H1 (cell line): ENCODE measurements at regions of chr6 and their contacts with region 1.

Region 1: GRCh38 chr6:15621203-15622044 is 41.4 kb downstream of the DTNBP1 start:
- DNase-seq: no peak
- H3K4me3 ChIP-seq: no peak overlapping the region
- H3K27ac ChIP-seq: no peak overlapping the region
- H3K4me1 ChIP-seq: peaks cover under 1 to 4% (median 1%) of the 10 kb centered on the region in 4 experiments; a peak in 4 of 7 replicates
- H3K27me3 ChIP-seq: no peaks in the 10 kb centered on the region
- CTCF ChIP-seq: no peak
- EP300 ChIP-seq: no peak
- POLR2A ChIP-seq: no peak
- RAD21 ChIP-seq: peak in 1 of 2 experiments; percentile 14; a peak in 1 of 4 replicates

Region 2: DNA sequence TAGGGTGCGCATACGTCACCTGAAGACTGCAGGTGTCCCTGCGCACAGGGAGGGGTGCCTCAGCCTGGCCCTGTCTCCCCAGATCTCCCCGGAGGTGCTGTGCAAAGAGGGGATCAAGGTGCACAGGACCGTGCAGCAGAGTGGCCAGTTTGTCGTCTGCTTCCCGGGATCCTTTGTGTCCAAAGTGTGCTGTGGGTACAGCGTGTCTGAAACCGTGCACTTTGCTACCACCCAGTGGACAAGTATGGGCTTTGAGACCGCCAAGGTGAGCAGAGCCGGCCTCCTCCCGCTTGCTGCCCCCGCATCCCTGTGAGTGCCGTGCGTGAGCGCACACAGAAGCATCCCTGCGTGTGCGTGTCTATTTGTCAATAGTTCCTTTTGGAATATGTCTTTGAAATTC is 109.3 kb before region 1 on chr6:
- CTCF ChIA-PET with region 1: interaction called, 24 read pairs
- POLR2A ChIA-PET with region 1: no interaction called
- DNase-seq: no peak
- H3K4me3 ChIP-seq: no peak overlapping the region
- H3K27ac ChIP-seq: no peak overlapping the region
- H3K4me1 ChIP-seq: peaks cover 0 to 9% (median 5%) of the 10 kb centered on the region in 4 experiments; a peak in 6 of 7 replicates
- H3K27me3 ChIP-seq: no peaks in the 10 kb centered on the region
- CTCF ChIP-seq: peak in 2 of 3 experiments; percentile 15 to 21; a peak in 1 of 4 replicates
- EP300 ChIP-seq: no peak
- POLR2A ChIP-seq: no peak
- RAD21 ChIP-seq: peak; percentile 28 to 46; a peak in 3 of 4 replicates

Region 3: GRCh38 chr6:15518057-15518456 is 103.4 kb before region 1 on chr6:
- CTCF ChIA-PET with region 1: interaction called, 24 read pairs
- POLR2A ChIA-PET with region 1: interaction called, 4 read pairs
- DNase-seq: no peak
- H3K4me3 ChIP-seq: no peak overlapping the region
- H3K27ac ChIP-seq: no peak overlapping the region
- H3K4me1 ChIP-seq: no peaks in the 10 kb centered on the region; a peak in 1 of 7 replicates
- H3K27me3 ChIP-seq: no peaks in the 10 kb centered on the region
- CTCF ChIP-seq: no peak
- EP300 ChIP-seq: no peak
- POLR2A ChIP-seq: no peak
- RAD21 ChIP-seq: no peak

Region 4: GRCh38 chr6:15551798-15552197 is 69.6 kb before region 1 on chr6:
- CTCF ChIA-PET with region 1: interaction called, 15 read pairs
- POLR2A ChIA-PET with region 1: interaction called, 3 read pairs
- DNase-seq: no peak
- H3K4me3 ChIP-seq: no peak overlapping the region
- H3K27ac ChIP-seq: no peak overlapping the region
- H3K4me1 ChIP-seq: peaks cover 0 to 12% (median 8%) of the 10 kb centered on the region in 4 experiments; a peak in 4 of 7 replicates
- H3K27me3 ChIP-seq: no peaks in the 10 kb centered on the region; a peak in 1 of 7 replicates
- CTCF ChIP-seq: no peak
- EP300 ChIP-seq: no peak
- POLR2A ChIP-seq: no peak
- RAD21 ChIP-seq: no peak

Region 5: GRCh38 chr6:15608396-15608795 is 13.0 kb before region 1 on chr6:
- CTCF ChIA-PET with region 1: interaction called, 36 read pairs
- POLR2A ChIA-PET with region 1: no interaction called
- DNase-seq: no peak
- H3K4me3 ChIP-seq: no peak overlapping the region
- H3K27ac ChIP-seq: no peak overlapping the region
- H3K4me1 ChIP-seq: peaks cover 0 to 3% (median 0%) of the 10 kb centered on the region in 4 experiments; a peak in 1 of 7 replicates
- H3K27me3 ChIP-seq: no peaks in the 10 kb centered on the region
- CTCF ChIP-seq: no peak
- EP300 ChIP-seq: no peak
- POLR2A ChIP-seq: no peak
- RAD21 ChIP-seq: no peak

Region 6: DNA sequence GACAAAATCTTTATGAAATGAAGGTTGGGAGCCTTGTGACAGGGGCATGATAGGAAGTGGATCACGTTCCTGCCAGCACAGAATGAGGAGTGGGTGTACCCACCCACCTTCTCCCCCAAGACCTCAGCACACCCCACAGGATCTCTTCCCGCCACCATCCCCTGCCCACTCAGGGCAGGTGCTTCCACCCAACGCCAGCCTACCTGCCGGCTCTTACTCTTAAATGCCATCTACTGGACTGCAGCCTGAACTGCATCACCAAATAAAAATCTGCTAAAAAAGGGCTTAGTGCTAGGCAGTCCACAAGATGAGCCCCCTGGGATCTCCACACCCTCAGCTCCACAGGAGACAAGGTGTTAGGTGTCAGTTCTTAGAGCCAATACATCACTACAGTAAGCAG is 20.9 kb after region 1 on chr6:
- CTCF ChIA-PET with region 1: interaction called, 17 read pairs
- POLR2A ChIA-PET with region 1: no interaction called
- DNase-seq: peak in 1 of 2 experiments; percentile 67
- H3K4me3 ChIP-seq: no peak overlapping the region
- H3K27ac ChIP-seq: no peak overlapping the region
- H3K4me1 ChIP-seq: no peaks in the 10 kb centered on the region
- H3K27me3 ChIP-seq: no peaks in the 10 kb centered on the region; a peak in 1 of 7 replicates
- CTCF ChIP-seq: peak; percentile 49 to 69 (median 68)
- EP300 ChIP-seq: no peak
- POLR2A ChIP-seq: no peak
- RAD21 ChIP-seq: peak; percentile 57 to 72

Region 7: DNA sequence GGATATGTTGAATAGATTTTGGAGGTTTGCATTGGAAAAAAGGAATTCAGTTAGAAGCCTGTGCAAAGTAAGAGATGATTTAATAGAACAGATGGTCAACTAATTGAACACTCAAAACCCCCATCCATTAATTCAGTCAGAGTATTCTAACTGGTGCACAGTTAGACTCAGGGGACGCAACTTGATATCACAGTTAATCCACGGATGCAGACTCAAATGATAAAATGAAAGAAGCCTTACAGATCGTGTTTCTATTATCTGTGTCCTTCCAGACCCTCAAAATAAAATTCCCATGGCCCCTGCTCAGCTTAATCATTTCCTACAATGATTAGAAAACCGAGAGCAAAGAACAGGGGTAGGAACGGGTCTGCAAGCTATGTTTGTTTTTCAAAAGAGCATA is 86.8 kb after region 1 on chr6:
- CTCF ChIA-PET with region 1: no interaction called
- POLR2A ChIA-PET with region 1: no interaction called
- DNase-seq: no peak
- H3K4me3 ChIP-seq: no peak overlapping the region
- H3K27ac ChIP-seq: no peak overlapping the region
- H3K4me1 ChIP-seq: no peaks in the 10 kb centered on the region; a peak in 1 of 7 replicates
- H3K27me3 ChIP-seq: no peaks in the 10 kb centered on the region
- CTCF ChIP-seq: no peak
- EP300 ChIP-seq: no peak
- POLR2A ChIP-seq: no peak
- RAD21 ChIP-seq: no peak